AG04449 (cell line): ENCODE measurements at regions of chr20 and their contacts with region 1.

Region 1: GRCh38 chr20:51595058-51595532 is 52.6 kb upstream of the NFATC2 start:
- DNase-seq: peak; percentile 55
- H3K4me3 ChIP-seq: no peak overlapping the region
- CTCF ChIP-seq: peak; percentile 94

Region 2: DNA sequence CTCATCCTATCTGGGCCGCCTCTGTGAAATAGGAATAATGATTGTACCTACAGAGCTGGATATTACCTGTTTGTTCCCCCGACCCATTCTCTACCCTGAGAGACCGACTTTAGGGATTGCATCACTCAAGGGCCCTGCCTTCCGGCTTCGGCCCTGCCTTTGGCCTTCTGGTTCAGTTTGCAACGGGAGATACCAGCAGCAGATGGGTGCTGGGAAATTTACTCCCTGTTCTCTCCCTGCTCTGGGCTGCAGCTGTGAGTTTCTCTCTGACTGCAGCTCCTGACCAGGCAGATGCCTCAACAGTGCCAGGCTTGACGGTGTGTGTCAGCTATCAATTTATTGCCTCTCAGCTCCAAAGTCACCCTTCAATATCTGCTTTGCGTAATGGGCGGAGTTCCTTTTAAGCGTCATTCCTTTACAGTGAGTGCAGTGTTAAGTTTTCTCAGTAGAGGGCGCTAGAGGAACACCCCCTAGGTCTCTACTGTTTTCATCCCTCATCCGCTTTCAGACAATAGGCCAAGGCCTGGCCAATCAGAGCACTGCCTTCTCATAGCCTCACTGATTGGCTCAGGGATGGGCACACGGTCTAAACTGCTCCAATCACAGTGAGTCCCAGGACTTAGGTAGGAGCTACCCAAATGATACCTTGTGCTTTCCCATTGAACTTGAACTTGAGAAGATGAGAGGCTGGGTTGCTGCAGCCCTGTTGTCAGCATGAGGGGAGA is 602.2 kb before region 1 on chr20:
- CTCF ChIA-PET with region 1: interaction called, 63 read pairs
- POLR2A ChIA-PET with region 1: no interaction called
- DNase-seq: no peak
- H3K4me3 ChIP-seq: no peak overlapping the region
- CTCF ChIP-seq: peak; percentile 57

Region 3: GRCh38 chr20:51022803-51023630 is 572.1 kb before region 1 on chr20 and contains the start of gene KCNG1:
- CTCF ChIA-PET with region 1: no interaction called
- POLR2A ChIA-PET with region 1: no interaction called
- DNase-seq: no peak
- H3K4me3 ChIP-seq: peak within 1 kb of the TSS; percentile 70
- CTCF ChIP-seq: no peak

Region 4: GRCh38 chr20:51366155-51366886 is 228.8 kb before region 1 on chr20:
- CTCF ChIA-PET with region 1: interaction called, 206 read pairs
- POLR2A ChIA-PET with region 1: interaction called, 3 read pairs
- DNase-seq: peak; percentile 100
- H3K4me3 ChIP-seq: no peak overlapping the region
- CTCF ChIP-seq: no peak

Region 5: DNA sequence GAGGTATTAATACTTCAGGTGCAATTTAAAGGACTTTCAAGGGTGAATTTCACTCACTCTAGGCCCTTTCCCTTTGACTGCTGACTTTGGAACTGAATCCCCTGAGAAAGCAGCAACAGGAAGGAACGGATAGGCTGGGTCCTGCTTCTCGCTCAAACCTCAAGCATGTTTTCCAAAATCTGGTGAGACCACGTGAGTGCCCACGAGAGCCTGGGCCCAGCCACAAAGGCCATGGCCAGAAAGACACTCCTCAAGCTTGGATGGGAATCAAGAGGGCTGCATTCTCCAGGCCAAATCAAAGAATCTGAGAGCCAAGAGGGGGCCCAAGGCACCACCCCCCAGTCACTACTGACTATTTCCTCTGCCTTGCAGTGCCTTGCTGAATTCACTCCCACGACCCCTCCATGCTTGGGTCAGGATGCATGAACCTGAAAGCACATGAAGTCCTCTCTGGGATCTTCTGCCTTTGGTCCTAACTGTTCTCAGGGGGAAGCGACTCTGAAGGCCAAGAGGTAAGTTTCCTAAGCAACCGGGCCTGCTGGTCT is 198.7 kb before region 1 on chr20:
- CTCF ChIA-PET with region 1: interaction called, 13 read pairs
- POLR2A ChIA-PET with region 1: no interaction called
- DNase-seq: no peak
- H3K4me3 ChIP-seq: no peak overlapping the region
- CTCF ChIP-seq: no peak

Region 6: GRCh38 chr20:51512645-51513044 is 82.5 kb before region 1 on chr20:
- CTCF ChIA-PET with region 1: no interaction called
- POLR2A ChIA-PET with region 1: no interaction called
- DNase-seq: no peak
- H3K4me3 ChIP-seq: no peak overlapping the region
- CTCF ChIP-seq: no peak

Region 7: DNA sequence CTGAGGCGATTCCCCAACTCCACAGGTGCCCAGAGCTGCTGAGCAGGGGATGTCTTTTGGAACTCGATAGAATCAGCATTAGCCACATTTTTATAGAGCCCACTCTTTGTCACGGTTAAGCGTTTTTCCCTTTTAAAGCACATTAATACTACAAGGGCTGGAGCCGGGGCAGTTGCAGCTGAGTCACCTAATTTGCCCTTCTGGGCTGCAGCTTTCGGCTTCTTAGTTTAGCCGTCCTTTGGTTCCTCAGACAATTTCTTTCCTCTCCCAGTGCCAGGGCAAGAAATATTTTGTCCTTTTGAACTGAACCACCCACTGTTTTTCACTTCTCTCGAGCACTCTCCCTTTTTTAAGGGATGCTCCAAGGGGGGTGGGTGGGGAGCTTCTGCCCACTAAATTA is 29.4 kb before region 1 on chr20:
- CTCF ChIA-PET with region 1: interaction called, 15 read pairs
- POLR2A ChIA-PET with region 1: no interaction called
- DNase-seq: no peak
- H3K4me3 ChIP-seq: no peak overlapping the region
- CTCF ChIP-seq: no peak

Region 8: DNA sequence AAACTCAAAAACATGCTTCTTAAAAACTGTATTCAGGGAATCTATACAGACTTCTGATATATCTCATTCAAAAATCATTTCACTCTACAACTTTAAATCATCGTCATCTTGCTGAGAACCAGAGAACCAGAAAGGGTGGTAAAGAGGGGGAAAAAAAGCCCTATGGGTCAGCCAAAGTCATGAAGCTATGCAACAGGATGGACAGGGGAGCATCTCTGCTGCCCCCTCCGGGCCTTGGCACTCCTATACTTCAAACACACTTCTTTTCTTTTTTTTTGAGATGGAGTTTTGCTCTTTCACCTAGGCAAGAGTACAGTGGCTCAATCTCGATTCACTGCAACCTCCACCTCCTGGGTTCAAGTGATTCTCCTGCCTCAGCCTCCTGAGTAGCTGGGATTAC is 21.0 kb after region 1 on chr20:
- CTCF ChIA-PET with region 1: interaction called, 24 read pairs
- POLR2A ChIA-PET with region 1: no interaction called
- DNase-seq: no peak
- H3K4me3 ChIP-seq: no peak overlapping the region
- CTCF ChIP-seq: peak; percentile 4